ENCODE measurements at regions of chr13 and their contacts with region 1.

Region 1: DNA sequence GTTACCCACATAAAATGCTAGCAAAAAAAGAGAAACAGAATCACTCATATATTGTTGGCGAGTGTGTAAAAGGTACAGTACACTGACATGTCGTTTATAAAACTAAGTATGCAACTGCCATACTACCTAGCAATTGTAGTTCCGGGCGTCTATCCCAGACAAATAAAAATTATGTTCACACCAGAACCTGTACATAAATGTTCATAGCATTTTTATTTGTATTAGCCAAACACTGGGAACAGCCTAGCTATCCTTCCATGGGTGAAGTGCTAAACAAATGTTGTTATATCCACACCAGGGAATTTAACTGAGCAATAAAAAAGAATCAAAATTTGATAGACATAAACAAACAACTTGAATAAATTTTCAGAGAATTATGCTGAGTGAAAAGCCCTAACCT is 28.9 kb upstream of the POSTN start:
- DNase-seq: no peak
- H3K4me3 Mint-ChIP-seq: no peak overlapping the region
- H3K27ac Mint-ChIP-seq: no peak overlapping the region
- H3K4me1 Mint-ChIP-seq: no peaks in the 10 kb centered on the region
- H3K27me3 Mint-ChIP-seq: no peaks in the 10 kb centered on the region

Region 2: GRCh38 chr13:38073931-38074330 is 446.5 kb after region 1 on chr13:
- intact Hi-C with region 1: no loop called
- DNase-seq: no peak
- H3K4me3 Mint-ChIP-seq: no peak overlapping the region
- H3K27ac Mint-ChIP-seq: no peak overlapping the region
- H3K4me1 Mint-ChIP-seq: no peaks in the 10 kb centered on the region
- H3K27me3 Mint-ChIP-seq: no peaks in the 10 kb centered on the region

Region 3: GRCh38 chr13:38483623-38484022 is 856.2 kb after region 1 on chr13:
- intact Hi-C with region 1: loop called (anchors 5 kb)
- DNase-seq: no peak
- H3K4me3 Mint-ChIP-seq: no peak overlapping the region
- H3K27ac Mint-ChIP-seq: no peak overlapping the region
- H3K4me1 Mint-ChIP-seq: no peaks in the 10 kb centered on the region
- H3K27me3 Mint-ChIP-seq: no peaks in the 10 kb centered on the region

Measured in activated CD4-positive, alpha-beta T cell treated with anti-CD3 and anti-CD28 coated beads, Interleukin-2, amount 10 ng/mL, durations not matched to agents 24 days and 14 days (primary cell).